PC-9 (cell line): ENCODE measurements at regions of chr1 and their contacts with region 1.

Region 1: DNA sequence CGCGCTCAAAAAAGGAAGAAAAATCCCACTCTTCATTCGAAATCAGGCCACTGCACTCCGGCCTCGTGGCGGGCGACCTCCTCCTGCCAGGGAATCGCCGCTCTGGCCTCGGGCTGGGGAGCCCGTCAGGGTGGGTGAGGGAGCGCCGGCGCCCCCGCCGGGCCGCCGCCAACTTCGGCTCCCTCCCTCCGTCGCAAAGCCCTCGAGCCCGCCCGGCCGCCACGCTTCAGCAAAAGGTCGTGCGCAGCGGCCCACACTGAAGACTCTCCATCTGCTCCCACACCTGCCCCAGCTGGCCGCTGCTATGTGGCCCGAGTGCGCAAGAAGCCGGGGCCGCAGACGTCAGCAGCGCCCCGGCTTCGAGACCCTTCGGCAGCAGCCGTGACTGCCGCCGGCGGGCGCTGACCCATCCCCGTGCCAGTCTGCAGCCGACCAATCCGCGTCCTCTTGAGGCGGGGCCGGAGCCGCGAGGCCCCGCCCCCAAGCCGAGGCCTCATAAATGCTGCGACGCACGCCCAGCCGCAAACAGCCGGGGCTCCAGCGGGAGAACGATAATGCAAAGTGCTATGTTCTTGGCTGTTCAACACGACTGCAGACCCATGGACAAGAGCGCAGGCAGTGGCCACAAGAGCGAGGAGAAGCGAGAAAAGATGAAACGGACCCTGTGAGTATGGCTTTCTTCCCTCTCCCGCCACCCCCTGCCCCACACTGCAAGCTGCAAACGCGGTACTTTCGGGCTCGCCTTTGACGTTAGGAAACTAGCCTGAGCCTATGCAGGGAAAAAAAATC is at the start of gene RGS2:
- DNase-seq: peak; percentile 79 to 85
- H3K4me3 ChIP-seq: peak within 1 kb of the TSS; percentile 71
- H3K27ac ChIP-seq: peak within 1 kb of the TSS; percentile 42
- H3K4me1 ChIP-seq: peaks cover 17% of the 10 kb centered on the region
- H3K27me3 ChIP-seq: no peaks in the 10 kb centered on the region
- CTCF ChIP-seq: peak; percentile 55; the same call in 1 of the 2 replicates
- total RNA-seq, gene RGS2: 0.50 and 1.4 TPM in 2 replicates

Region 2: GRCh38 chr1:192477630-192478029 is 331.1 kb before region 1 on chr1:
- CTCF ChIA-PET with region 1: interaction called, 3 read pairs
- POLR2A ChIA-PET with region 1: no interaction called
- intact Hi-C with region 1: loop called (anchors 5 kb)
- DNase-seq: peak in 1 of 2 experiments; percentile 39
- H3K4me3 ChIP-seq: no peak overlapping the region
- H3K27ac ChIP-seq: no peak overlapping the region
- H3K4me1 ChIP-seq: no peaks in the 10 kb centered on the region
- H3K27me3 ChIP-seq: no peaks in the 10 kb centered on the region
- CTCF ChIP-seq: peak; percentile 70

Region 3: GRCh38 chr1:192609110-192610079 is 199.3 kb before region 1 on chr1:
- CTCF ChIA-PET with region 1: no interaction called
- POLR2A ChIA-PET with region 1: no interaction called
- intact Hi-C with region 1: loop called (anchors 10 kb)
- DNase-seq: no peak
- H3K4me3 ChIP-seq: no peak overlapping the region
- H3K27ac ChIP-seq: no peak overlapping the region
- H3K4me1 ChIP-seq: peaks cover 7% of the 10 kb centered on the region
- H3K27me3 ChIP-seq: no peaks in the 10 kb centered on the region
- CTCF ChIP-seq: no peak

Region 4: GRCh38 chr1:192700834-192701271 is 107.9 kb before region 1 on chr1:
- CTCF ChIA-PET with region 1: interaction called, 4 read pairs
- POLR2A ChIA-PET with region 1: no interaction called
- intact Hi-C with region 1: loop called (anchors 5 kb)
- DNase-seq: peak in 1 of 2 experiments; percentile 40
- H3K4me3 ChIP-seq: no peak overlapping the region
- H3K27ac ChIP-seq: peak overlapping the region; percentile 37; the same call in 1 of the 2 replicates
- H3K4me1 ChIP-seq: peaks cover 36% of the 10 kb centered on the region
- H3K27me3 ChIP-seq: no peaks in the 10 kb centered on the region
- CTCF ChIP-seq: no peak

Region 5: DNA sequence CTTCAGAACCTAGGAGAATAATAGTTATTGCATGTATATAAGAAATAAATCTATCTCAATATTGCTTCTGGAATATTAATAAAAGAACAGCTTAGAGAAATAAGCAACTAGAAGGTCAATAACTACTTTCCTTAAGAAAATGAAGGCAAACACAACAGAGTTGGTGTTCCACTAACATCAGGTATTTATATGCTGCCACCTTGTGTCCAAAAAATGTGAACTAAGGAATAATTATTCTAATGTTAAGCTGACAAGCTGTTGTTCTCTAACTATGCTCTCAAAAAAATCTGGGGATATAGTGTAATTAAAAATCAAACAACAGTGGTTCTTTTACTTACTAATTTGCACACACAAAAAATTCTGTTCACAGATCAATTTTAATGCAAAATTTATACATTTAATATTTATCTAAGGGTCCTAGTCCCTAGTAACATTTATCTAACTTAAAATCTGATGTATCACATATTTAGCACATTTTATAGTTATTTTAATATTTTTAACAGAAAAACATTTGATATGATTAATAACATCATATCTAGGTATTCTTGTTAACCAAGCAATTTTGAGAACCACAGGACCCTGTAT is 210.8 kb after region 1 on chr1:
- CTCF ChIA-PET with region 1: no interaction called
- POLR2A ChIA-PET with region 1: no interaction called
- intact Hi-C with region 1: loop called (anchors 2 kb)
- DNase-seq: peak in 1 of 2 experiments; percentile 47
- H3K4me3 ChIP-seq: no peak overlapping the region
- H3K27ac ChIP-seq: no peak overlapping the region
- H3K4me1 ChIP-seq: no peaks in the 10 kb centered on the region
- H3K27me3 ChIP-seq: no peaks in the 10 kb centered on the region
- CTCF ChIP-seq: peak; percentile 71

Region 6: DNA sequence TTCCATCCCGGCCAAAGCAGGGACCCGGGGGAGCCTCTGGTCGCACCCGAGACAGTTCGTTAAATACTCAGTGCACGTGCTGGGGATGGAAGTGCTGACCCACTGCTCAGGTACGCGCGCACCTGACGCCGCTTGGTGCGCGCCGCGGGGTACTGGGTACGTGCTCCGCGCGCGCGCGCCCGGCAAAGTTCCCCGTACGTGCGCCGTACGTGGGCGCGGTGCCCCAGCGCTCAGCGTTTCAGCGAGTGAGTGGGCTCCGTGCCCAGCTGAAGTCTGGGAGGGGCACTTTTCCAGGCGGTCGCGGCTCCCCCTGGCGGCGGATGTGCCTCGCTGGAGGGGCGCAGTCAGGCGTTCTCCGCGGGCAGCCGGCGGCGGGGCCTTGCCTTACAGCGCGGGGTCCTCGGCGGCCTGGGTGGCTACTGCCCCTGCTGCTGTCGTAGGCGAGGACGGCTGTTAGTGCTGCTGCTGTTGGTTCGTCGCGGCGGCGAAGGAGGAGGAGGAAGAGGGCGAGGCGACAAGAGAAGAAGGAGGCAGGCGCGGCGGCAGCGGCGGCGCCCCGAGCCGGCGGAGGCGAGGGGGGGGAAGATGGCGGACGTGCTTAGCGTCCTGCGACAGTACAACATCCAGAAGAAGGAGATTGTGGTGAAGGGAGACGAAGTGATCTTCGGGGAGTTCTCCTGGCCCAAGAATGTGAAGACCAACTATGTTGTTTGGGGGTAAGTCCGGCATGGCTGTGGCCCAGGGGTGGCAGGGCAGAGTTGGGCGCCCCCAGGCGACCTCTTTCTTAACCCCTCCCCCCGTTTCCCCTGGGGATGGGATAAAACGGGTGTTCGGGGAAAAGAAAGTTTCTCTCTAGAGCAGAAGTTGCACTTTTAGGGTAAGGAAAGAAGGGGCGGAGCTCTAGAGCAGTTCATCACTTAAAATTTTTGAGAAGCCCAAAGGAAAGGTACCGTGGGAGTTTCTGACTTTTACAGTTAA is 313.2 kb after region 1 on chr1 and contains the start of gene CDC73:
- CTCF ChIA-PET with region 1: no interaction called
- POLR2A ChIA-PET with region 1: no interaction called
- intact Hi-C with region 1: loop called (anchors 1 kb)
- DNase-seq: peak; percentile 85 to 99
- H3K4me3 ChIP-seq: peak within 1 kb of the TSS; percentile 100
- H3K27ac ChIP-seq: peak within 1 kb of the TSS; percentile 88
- H3K4me1 ChIP-seq: peaks cover 15% of the 10 kb centered on the region; the same call in 1 of the 2 replicates
- H3K27me3 ChIP-seq: no peaks in the 10 kb centered on the region
- CTCF ChIP-seq: peak; percentile 79
- total RNA-seq, gene CDC73: 39.6 and 47.1 TPM in 2 replicates